ENCODE measurements at regions of chr6 and their contacts with region 1.

Region 1: GRCh38 chr6:37566111-37566949 is 66.6 kb upstream of the CCDC167 start:
- DNase-seq: peak; percentile 59
- ATAC-seq: peak; percentile 92 to 94

Region 2: GRCh38 chr6:37324131-37325033 is 241.9 kb before region 1 on chr6:
- intact Hi-C with region 1: loop called in 1 of 2 experiments (anchors 10 kb)
- DNase-seq: no peak
- ATAC-seq: no peak

Region 3: GRCh38 chr6:37381579-37381978 is 184.8 kb before region 1 on chr6:
- intact Hi-C with region 1: loop called (anchors 10 kb)
- DNase-seq: no peak
- ATAC-seq: peak; percentile 30 to 62

Region 4: GRCh38 chr6:37442416-37443215 is 123.7 kb before region 1 on chr6:
- intact Hi-C with region 1: no loop called
- DNase-seq: no peak
- ATAC-seq: peak; percentile 82 to 85

Region 5: DNA sequence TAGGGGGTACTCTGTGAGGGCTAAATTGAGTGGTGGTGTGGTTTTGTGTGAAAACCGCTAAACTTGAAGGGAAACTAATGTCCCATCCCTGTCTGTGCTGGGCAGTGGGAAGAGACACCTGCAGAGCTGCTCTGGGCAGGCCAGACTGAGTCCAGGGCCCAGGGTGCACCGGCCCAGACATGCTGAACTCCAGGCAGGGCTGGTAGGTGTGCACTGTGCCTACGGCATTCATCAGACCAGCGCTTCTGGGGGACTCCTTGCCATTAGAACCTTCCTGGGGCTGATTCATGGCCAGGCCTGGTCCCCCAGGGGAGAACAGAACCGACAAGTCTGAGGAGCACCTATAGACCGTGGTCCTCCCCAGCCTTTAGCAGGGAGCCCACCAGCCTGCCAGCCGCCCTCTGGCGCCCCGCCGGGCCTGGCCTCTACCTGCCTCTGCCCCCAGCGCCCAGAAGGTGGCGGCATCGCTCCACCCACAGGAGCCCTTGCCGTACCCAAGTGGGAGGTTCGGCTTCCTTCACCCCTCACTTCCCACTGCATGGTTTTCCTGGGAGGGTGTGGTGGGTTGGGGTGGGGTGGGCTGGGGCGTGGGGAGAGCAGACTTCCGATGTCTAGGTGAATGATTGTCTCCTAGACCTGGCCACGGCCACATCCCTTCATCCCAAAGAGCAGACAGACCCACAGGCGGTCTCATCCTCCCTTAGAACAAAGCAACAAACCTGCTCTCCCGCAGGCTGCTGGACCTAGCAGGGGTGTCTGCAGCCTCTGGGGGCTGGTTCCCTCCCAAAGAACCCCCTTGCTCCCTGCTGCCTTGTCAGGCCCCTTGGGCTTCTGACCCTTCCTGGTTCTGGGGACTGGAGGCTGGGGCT is 82.2 kb before region 1 on chr6:
- intact Hi-C with region 1: loop called (anchors 5 to 10 kb)
- DNase-seq: peak; percentile 61
- ATAC-seq: peak; percentile 64 to 72

Region 6: GRCh38 chr6:37489660-37490361 is 76.5 kb before region 1 on chr6:
- intact Hi-C with region 1: loop called (anchors 5 to 10 kb)
- DNase-seq: no peak
- ATAC-seq: peak; percentile 40 to 43

Region 7: DNA sequence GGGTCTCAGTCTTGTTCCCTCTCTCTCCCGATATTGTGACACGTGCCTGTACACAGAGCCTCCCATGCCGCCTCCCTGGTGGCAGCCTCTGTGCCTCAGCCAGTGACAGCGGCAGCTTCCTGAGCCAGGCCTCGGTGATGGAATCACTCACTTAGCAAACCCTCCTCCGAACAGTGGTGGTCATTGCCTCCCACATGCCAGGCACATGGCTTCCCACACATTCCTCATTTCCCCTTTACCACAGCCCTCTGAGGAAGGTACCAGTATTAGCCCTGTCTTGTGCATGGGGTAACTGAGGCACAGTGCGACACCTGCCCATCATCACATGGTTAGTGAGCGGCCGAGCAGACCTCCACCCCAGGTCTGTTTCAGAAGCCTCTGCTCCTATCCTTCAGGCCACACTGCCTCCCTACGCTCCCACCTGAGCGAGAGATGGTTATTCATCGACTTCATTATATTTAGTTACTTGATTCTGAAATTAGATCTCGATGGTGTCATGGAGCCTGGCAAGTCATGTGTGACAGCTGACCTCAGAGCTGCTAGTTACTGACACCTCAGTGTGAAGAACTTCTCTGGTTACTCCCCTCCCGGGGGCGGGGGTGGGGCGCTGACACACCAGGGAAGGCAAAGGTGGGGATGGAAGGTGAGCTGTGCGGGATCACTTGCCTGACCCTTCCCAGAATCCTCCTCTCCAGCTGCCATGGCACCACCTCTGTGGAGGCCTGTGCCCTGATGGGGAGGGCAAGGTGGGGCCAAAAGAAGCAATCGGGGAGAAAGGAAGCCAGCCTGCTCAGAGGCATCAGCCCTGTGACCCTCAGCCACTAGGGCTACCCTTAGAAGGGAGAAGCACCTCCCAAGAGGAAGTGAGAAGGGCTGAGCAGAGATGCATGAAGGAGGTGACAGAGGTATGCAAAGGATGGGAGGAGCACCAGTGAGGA is 113.5 kb after region 1 on chr6:
- intact Hi-C with region 1: loop called in 1 of 2 experiments (anchors 10 kb)
- DNase-seq: peak; percentile 48
- ATAC-seq: peak; percentile 34 to 62

Region 8: GRCh38 chr6:37691904-37692806 is 125.8 kb after region 1 on chr6:
- intact Hi-C with region 1: loop called (anchors 10 kb)
- DNase-seq: peak; percentile 72
- ATAC-seq: peak; percentile 81 to 83

Measured in left cardiac atrium (tissue), 4 donors.